ENCODE measurements at regions of chr6 and their contacts with region 1.

Region 1: GRCh38 chr6:137799950-137800568 is 67.0 kb upstream of the TNFAIP3 start:
- DNase-seq: peak in 13 of 14 experiments; percentile 22 to 92 (median 57)
- ATAC-seq: peak; percentile 82
- H3K4me3 ChIP-seq: no peak overlapping the region
- H3K4me3 Mint-ChIP-seq: peak overlapping the region; percentile 14
- H3K27ac ChIP-seq: no peak overlapping the region
- H3K27ac Mint-ChIP-seq: peak overlapping the region; percentile 78
- H3K4me1 ChIP-seq: peaks cover 24% of the 10 kb centered on the region
- H3K4me1 Mint-ChIP-seq: peaks cover 76% of the 10 kb centered on the region
- H3K27me3 ChIP-seq: no peaks in the 10 kb centered on the region
- H3K27me3 Mint-ChIP-seq: no peaks in the 10 kb centered on the region
- CTCF ChIP-seq: peak; percentile 79

Region 2: DNA sequence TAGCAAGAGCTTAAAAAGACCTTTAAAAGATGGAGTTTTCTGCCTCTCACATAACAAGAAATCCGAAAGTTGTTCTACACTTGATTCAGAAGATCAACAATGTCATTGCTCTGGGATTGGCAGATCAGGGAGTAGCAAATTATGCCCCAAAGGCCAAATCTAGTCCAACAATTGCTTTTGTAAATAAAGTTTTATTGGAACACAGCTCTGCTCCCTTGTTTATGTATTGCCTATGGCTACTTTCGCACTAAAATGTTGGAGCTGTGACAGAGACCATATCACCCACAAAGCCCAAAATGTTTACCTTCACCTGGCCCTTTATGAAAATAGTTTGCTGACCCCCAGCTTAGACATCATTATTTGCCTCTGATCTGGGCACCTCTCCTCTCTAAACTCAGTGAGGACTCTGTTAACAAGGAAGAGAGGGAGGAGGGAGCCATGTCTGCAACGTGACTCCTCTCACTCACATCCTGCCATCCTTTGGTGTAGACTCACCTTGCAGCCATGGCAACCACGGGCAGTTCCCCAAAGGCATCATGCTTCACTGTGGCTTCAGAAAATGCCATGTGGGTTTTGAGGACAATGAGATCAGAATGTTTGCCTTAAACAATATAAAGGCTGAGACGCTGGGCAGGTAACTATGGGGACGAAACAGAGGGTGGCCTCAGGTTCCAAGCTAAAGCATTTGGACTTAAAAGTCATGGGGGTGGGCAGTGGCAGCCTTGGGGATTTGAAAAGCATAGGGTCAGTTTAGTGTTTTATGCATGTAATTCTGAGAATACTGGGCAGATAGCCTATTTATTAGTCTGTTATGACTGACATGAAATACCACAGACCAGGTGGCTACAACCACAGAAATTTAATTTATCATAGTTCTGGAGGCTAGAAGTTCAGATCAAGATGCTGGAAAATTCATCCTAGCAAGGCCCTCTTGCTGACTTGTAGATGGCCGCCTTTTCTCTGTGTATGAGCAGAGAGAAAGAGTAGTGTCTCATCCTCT is 82.7 kb before region 1 on chr6:
- CTCF ChIA-PET with region 1: interaction called, 29 read pairs
- POLR2A ChIA-PET with region 1: interaction called, 10 read pairs
- intact Hi-C with region 1: loop called in 1 of 2 experiments (anchors 2 kb)
- DNase-seq: peak; percentile 48 to 96 (median 70)
- ATAC-seq: peak; percentile 52
- H3K4me3 ChIP-seq: no peak overlapping the region
- H3K4me3 Mint-ChIP-seq: peak overlapping the region; percentile 71
- H3K27ac ChIP-seq: peak overlapping the region; percentile 59 to 72
- H3K27ac Mint-ChIP-seq: peak overlapping the region; percentile 91
- H3K4me1 ChIP-seq: peaks cover 23% of the 10 kb centered on the region
- H3K4me1 Mint-ChIP-seq: peaks cover 46% of the 10 kb centered on the region
- H3K27me3 ChIP-seq: no peaks in the 10 kb centered on the region
- H3K27me3 Mint-ChIP-seq: no peaks in the 10 kb centered on the region
- CTCF ChIP-seq: no peak

Region 3: DNA sequence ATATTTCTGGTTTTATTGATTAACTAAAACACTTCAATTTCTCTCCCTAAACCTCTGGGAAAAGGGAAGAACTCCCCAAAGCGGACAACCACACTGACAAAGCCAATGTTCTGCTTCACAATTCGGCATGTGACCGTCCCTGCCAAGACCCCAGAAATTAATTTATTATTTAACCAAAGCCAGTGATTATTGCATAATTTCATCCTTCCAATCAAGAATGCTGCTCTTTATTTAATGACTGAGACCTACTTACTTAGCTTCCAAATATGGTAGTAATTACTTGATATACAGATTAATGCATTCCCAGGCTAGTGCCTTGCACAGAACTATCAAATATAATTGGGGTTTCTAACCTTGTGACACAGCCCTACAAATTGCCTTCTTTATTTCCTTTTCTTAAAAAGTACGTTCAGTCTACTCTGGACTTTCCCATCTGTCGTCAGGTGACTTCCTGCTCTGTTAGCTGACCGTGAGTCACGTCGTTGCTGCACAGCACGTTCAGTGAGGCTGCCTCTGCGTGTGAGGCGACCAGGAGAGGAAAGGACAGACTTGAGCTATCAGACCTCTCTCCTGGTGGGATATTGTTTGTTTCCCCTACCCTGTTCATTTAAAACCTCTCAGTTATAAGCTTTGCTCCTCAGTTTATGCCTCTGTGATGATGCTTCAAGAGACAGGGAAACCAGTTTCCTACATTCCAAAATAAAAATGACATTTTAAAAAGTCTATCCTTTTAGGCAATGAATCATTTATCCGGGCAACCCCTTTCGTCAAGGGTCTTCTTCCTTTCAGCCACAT is 11.3 kb after region 1 on chr6:
- CTCF ChIA-PET with region 1: interaction called, 11 read pairs
- POLR2A ChIA-PET with region 1: interaction called, 5 read pairs
- intact Hi-C with region 1: no loop called
- DNase-seq: peak; percentile 55 to 97 (median 68)
- ATAC-seq: peak; percentile 95
- H3K4me3 ChIP-seq: peak overlapping the region; percentile 5
- H3K4me3 Mint-ChIP-seq: peak overlapping the region; percentile 78
- H3K27ac ChIP-seq: peak overlapping the region; percentile 62 to 83
- H3K27ac Mint-ChIP-seq: peak overlapping the region; percentile 74
- H3K4me1 ChIP-seq: peaks cover 26% of the 10 kb centered on the region
- H3K4me1 Mint-ChIP-seq: peaks cover 49% of the 10 kb centered on the region
- H3K27me3 ChIP-seq: no peaks in the 10 kb centered on the region
- H3K27me3 Mint-ChIP-seq: no peaks in the 10 kb centered on the region
- CTCF ChIP-seq: no peak

Region 4: DNA sequence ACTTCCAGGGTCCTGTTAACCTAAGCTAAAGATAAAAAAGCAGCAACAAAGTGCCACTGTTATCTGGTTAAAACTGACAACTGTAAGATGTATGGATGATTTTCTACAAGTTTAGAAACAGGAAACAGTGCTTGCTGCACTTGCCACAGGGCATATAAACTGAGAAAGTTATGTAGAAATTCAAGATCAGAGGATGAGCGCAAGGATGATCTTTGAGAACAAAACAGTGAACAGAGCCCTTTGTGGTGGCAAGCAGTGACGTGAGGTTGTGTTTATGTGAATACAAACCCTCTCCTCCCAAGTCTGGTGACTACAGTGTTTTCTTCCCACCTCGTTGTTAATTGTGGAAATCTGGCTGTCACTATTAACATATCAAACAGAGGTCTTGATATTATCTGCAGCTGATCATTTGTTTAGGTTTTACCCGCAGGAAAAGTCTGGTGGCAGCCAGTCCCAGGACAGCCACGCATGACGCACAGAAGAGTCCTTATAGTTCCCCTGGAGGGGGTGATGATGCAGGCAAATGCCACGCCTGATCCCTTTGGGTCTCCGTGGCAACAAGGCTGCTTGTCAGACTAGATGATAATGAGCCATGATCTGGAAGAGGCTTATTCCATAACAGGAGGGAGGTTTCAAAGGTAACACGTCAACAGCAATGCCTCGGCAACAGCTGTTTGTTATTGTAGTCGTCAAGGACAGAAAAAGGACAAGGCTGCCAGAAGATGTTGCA is 23.9 kb after region 1 on chr6:
- CTCF ChIA-PET with region 1: interaction called, 24 read pairs
- POLR2A ChIA-PET with region 1: interaction called, 19 read pairs
- intact Hi-C with region 1: loop called in 1 of 2 experiments (anchors 1 kb)
- DNase-seq: peak; percentile 43 to 98 (median 76)
- ATAC-seq: peak; percentile 71
- H3K4me3 ChIP-seq: peak overlapping the region; percentile 21
- H3K4me3 Mint-ChIP-seq: peak overlapping the region; percentile 69
- H3K27ac ChIP-seq: peak overlapping the region; percentile 93 to 94
- H3K27ac Mint-ChIP-seq: peak overlapping the region; percentile 96
- H3K4me1 ChIP-seq: peaks cover 53% of the 10 kb centered on the region
- H3K4me1 Mint-ChIP-seq: peaks cover 70% of the 10 kb centered on the region
- H3K27me3 ChIP-seq: no peaks in the 10 kb centered on the region
- H3K27me3 Mint-ChIP-seq: no peaks in the 10 kb centered on the region
- CTCF ChIP-seq: no peak

Region 5: DNA sequence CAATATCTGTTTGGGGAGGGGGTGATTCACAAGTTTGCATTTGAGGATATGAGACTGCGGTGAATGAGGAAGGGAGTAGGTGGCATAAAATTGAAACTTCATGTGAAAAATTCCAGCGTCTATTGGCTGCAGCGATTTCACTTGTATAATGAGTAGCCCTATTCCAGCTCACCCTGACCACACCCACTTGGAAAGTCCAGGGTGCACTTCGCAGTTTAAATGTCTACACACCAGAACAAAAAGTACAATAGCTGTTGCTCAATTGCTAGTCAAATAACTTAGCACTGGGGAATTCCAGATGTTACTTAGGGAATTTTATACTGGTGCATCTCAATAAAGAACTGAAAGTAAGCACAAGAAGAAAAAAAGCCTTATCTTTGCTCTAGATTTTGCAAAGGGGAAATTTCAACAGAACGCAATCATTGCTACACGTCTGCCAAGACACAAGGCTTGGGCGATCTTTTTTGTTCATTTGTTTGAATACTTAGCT is 73.3 kb after region 1 on chr6:
- CTCF ChIA-PET with region 1: interaction called, 52 read pairs
- POLR2A ChIA-PET with region 1: interaction called, 141 read pairs
- intact Hi-C with region 1: no loop called
- DNase-seq: peak in 5 of 14 experiments; percentile 31 to 92 (median 67)
- ATAC-seq: peak; percentile 3
- H3K4me3 ChIP-seq: peak overlapping the region; percentile 21
- H3K4me3 Mint-ChIP-seq: peak overlapping the region; percentile 96
- H3K27ac ChIP-seq: peak overlapping the region in 1 of 2 donors; percentile 96
- H3K27ac Mint-ChIP-seq: peak overlapping the region; percentile 95
- H3K4me1 ChIP-seq: peaks cover 47% of the 10 kb centered on the region
- H3K4me1 Mint-ChIP-seq: peaks cover 87% of the 10 kb centered on the region
- H3K27me3 ChIP-seq: no peaks in the 10 kb centered on the region
- H3K27me3 Mint-ChIP-seq: no peaks in the 10 kb centered on the region
- CTCF ChIP-seq: no peak

Region 6: DNA sequence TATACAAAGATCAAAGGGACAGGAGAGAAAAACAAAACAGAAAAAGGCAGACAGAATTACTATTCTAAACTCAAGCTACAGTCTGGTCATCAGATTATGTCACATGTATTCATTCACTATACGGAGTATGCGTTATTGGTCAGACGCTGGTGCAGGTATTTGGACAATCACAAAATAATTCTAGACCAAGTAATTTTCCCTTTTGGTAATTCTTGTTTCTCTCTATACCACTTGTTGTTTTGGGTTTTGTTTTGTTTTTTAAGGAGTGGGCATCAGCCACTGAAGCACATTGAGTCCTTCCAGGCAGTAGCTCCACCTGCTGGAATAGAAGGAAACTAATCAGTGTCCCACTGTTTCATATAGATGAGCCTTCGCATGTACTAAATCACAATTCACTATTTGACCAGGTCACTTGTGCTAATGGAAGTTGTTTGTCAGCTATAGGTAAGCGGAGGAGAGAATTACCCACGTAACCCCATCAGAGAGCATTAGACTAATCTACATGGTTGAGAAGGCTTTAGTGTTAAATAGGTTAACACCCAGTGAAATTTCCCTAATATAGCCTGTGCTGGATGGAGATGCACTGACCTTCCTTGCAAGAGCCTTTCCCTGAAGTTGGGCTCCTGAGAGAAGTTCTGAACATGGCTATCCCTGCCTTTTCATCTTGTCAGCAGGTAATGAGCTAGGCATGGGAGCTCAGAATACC is 144.9 kb after region 1 on chr6:
- CTCF ChIA-PET with region 1: interaction called, 7 read pairs
- POLR2A ChIA-PET with region 1: interaction called, 6 read pairs
- intact Hi-C with region 1: loop called (anchors 1 to 2 kb)
- DNase-seq: peak in 5 of 14 experiments; percentile 10 to 69 (median 53)
- ATAC-seq: peak; percentile 71
- H3K4me3 ChIP-seq: no peak overlapping the region
- H3K4me3 Mint-ChIP-seq: no peak overlapping the region
- H3K27ac ChIP-seq: no peak overlapping the region
- H3K27ac Mint-ChIP-seq: no peak overlapping the region
- H3K4me1 ChIP-seq: peaks cover 5% of the 10 kb centered on the region
- H3K4me1 Mint-ChIP-seq: peaks cover 20% of the 10 kb centered on the region
- H3K27me3 ChIP-seq: no peaks in the 10 kb centered on the region
- H3K27me3 Mint-ChIP-seq: no peaks in the 10 kb centered on the region
- CTCF ChIP-seq: peak; percentile 96

Region 7: GRCh38 chr6:137975188-137975940 is 175.3 kb after region 1 on chr6:
- CTCF ChIA-PET with region 1: interaction called, 4 read pairs
- POLR2A ChIA-PET with region 1: interaction called, 4 read pairs
- intact Hi-C with region 1: loop called (anchors 2 to 10 kb)
- DNase-seq: peak in 5 of 14 experiments; percentile 17 to 85 (median 72)
- ATAC-seq: peak; percentile 81
- H3K4me3 ChIP-seq: peak overlapping the region; percentile 19
- H3K4me3 Mint-ChIP-seq: peak overlapping the region; percentile 82
- H3K27ac ChIP-seq: peak overlapping the region; percentile 64 to 72
- H3K27ac Mint-ChIP-seq: peak overlapping the region; percentile 84
- H3K4me1 ChIP-seq: peaks cover 37% of the 10 kb centered on the region
- H3K4me1 Mint-ChIP-seq: peaks cover 29% of the 10 kb centered on the region
- H3K27me3 ChIP-seq: no peaks in the 10 kb centered on the region
- H3K27me3 Mint-ChIP-seq: no peaks in the 10 kb centered on the region
- CTCF ChIP-seq: peak; percentile 60

Measured in CD4-positive, alpha-beta T cell (primary cell).